Activated CD4-positive, alpha-beta memory T cell treated with anti-CD3 and anti-CD28 coated beads, Interleukin-2, amount 10 ng/mL, durations not matched to agents 7 days and 5 days (primary cell): ENCODE measurements at regions of chr17 and their contacts with region 1.

Region 1: DNA sequence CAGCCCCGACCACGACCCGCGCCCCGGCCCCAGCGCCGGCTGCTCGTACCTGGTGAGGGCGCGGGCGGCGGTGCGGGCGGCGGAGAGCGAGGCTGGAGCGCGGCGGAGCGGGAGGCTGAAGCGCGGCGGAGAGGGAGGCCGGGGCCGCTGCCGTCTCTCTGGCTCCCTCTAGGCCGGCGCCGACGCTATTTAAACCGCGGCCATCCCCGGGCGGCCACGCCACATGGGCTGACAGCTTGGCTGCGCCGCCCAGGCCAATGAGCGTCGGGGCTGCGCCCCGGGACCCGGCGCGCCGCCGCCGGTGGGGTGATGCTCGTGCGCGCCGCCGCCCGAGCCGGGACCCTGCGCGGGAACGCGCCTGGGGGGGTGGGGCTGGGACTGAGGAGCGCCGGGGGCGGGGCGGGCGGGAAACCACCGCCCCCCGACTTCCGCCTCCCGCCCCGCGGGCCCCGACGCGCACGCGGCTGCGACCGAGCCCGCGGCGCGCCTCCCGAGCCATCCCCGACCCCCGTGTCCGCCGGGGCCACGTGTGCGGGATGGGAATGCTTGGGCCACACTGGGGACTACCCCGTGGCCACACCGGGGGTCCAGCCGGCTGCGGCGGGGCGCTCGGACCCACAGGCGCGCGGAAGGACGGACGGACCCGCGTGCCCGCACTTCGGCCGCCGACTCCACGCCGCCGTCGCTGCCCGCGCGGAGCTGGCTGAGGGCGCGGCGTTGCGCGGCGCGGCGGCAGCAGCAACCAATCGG is at the start of gene FASN:
- DNase-seq: peak; percentile 95
- H3K4me3 Mint-ChIP-seq: peak within 1 kb of the TSS; percentile 74
- H3K27ac Mint-ChIP-seq: peak within 1 kb of the TSS; percentile 71
- H3K4me1 Mint-ChIP-seq: peaks cover 23% of the 10 kb centered on the region
- H3K27me3 Mint-ChIP-seq: no peaks in the 10 kb centered on the region
- total RNA-seq, gene FASN: 181 to 191 TPM

Region 2: DNA sequence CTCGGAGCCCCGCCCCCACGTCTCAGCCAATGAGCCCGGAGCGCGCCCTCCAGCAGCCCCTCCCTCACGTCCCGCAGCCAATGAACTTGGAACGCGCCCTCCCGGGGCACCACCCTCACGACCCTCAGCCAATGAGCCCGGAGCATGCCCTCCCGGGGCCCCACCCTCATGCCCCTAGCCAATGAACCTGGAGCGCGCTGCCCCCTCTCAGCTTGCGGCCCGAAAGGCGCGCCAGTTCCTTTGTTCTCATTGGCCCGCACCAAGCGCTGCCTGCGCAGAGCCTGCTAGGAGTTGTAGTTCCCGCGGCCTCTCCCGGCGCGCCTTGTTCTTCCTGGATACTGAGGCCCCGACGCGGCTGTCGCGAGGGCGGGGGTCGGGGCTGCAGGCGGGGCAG is 75.3 kb before region 1 on chr17 and contains the start of gene LRRC45:
- CTCF ChIA-PET with region 1: interaction called, 7 read pairs
- POLR2A ChIA-PET with region 1: interaction called, 15 read pairs
- DNase-seq: peak; percentile 100
- H3K4me3 Mint-ChIP-seq: peak within 1 kb of the TSS; percentile 82
- H3K27ac Mint-ChIP-seq: peak within 1 kb of the TSS; percentile 60
- H3K4me1 Mint-ChIP-seq: peaks cover 42% of the 10 kb centered on the region
- H3K27me3 Mint-ChIP-seq: no peaks in the 10 kb centered on the region
- total RNA-seq, gene LRRC45: 34.8 to 35.5 TPM

Region 3: DNA sequence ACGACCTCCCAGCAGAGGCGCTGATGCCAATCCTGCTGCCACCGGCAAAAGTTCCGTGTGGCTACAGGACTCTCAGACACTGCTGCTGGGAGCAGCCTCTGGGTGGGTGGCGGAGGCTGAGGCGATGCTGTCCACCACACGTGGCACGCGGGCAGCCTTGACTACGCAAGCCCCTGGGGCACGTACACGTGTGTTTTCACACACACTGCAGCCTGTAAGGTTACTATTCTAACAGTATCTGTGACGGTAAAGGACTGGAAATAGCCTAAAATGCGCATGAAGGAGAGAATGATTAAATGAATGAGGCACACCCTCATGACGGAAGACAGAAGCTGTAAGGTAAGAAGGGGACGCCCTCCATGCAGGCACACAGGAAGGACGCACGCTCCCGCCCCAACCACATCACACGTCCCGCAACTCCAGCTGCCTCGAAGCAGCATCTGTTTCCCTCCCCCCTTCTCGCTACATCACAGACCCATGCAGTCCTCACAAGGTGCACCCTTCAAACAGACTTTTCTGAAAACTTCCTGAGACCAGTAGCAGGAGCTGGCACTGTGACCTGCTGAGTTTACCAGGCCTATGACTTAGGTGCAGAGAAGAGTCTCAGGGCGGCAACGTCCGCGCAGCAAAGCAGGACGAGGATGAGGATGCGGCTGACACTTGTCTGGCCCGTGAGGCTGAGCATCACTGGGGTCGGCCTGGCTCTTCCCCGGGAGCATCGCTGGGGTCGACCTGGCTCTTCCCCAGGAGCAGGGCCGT is 28.5 kb after region 1 on chr17:
- CTCF ChIA-PET with region 1: interaction called, 3 read pairs
- POLR2A ChIA-PET with region 1: interaction called, 12 read pairs
- DNase-seq: peak; percentile 80
- H3K4me3 Mint-ChIP-seq: peak overlapping the region; percentile 61
- H3K27ac Mint-ChIP-seq: peak overlapping the region; percentile 95
- H3K4me1 Mint-ChIP-seq: peaks cover 33% of the 10 kb centered on the region
- H3K27me3 Mint-ChIP-seq: no peaks in the 10 kb centered on the region